GM18951 (cell line): ENCODE measurements at regions of chr11 and their contacts with region 1.

Region 1: GRCh38 chr11:62081378-62082291 is 42.2 kb upstream of the INCENP start:
- POLR2A ChIP-seq: no peak

Region 2: GRCh38 chr11:61949169-61950034 is 132.2 kb before region 1 on chr11:
- in situ Hi-C with region 1: loop called (anchors 10 kb)
- POLR2A ChIP-seq: no peak

Region 3: GRCh38 chr11:62551696-62552250 is 470.1 kb after region 1 on chr11:
- in situ Hi-C with region 1: no loop called
- POLR2A ChIP-seq: no peak